Kidney (tissue), 22 donors: ENCODE measurements at regions of chr1 and their contacts with region 1.

Region 1: GRCh38 chr1:198443374-198444233 is 96.9 kb downstream of the ATP6V1G3 start:
- DNase-seq: no peak
- H3K4me3 ChIP-seq: no peak overlapping the region
- H3K27ac ChIP-seq: no peak overlapping the region
- H3K4me1 ChIP-seq: no peaks in the 10 kb centered on the region
- H3K27me3 ChIP-seq: no peaks in the 10 kb centered on the region
- CTCF ChIP-seq: no peak

Region 2: DNA sequence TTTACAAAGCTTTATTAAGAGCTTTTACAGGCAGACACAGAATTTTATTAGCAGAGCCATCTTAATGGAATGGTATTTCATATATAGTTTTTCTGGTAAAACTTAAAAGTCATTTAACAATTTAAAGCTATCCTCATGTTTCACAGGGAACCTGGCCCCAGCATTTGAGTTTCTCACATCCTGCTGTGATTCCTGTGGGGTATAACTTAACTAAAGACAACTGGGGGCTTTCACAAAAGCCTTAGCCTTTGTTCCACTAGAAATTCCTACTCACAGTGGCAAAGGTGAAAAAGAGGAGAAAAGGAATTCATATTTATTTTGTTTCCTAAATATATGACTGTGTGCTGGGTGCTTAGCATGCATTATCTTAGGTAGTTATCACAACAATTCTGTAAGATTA is 902.2 kb before region 1 on chr1:
- intact Hi-C with region 1: loop called (anchors 10 kb)
- DNase-seq: no peak
- H3K4me3 ChIP-seq: no peak overlapping the region
- H3K27ac ChIP-seq: no peak overlapping the region
- H3K4me1 ChIP-seq: no peaks in the 10 kb centered on the region
- H3K27me3 ChIP-seq: no peaks in the 10 kb centered on the region
- CTCF ChIP-seq: no peak

Region 3: GRCh38 chr1:198318085-198318484 is 125.5 kb before region 1 on chr1:
- intact Hi-C with region 1: no loop called
- DNase-seq: no peak
- H3K4me3 ChIP-seq: no peak overlapping the region
- H3K27ac ChIP-seq: no peak overlapping the region
- H3K4me1 ChIP-seq: no peaks in the 10 kb centered on the region
- H3K27me3 ChIP-seq: no peaks in the 10 kb centered on the region
- CTCF ChIP-seq: no peak